HEK293 (cell line): ENCODE measurements at regions of chr6 and their contacts with region 1.

Region 1: GRCh38 chr6:56902641-56903464 is 52.1 kb upstream of the BEND6 start:
- H3K4me3 ChIP-seq: no peak overlapping the region
- H3K27ac ChIP-seq: no peak overlapping the region
- H3K4me1 ChIP-seq: no peaks in the 10 kb centered on the region
- CTCF ChIP-seq: no peak; the same call in 1 of the 2 replicates

Region 2: GRCh38 chr6:56582236-56582635 is 320.6 kb before region 1 on chr6:
- CTCF ChIA-PET with region 1: no interaction called
- POLR2A ChIA-PET with region 1: no interaction called
- H3K4me3 ChIP-seq: no peak overlapping the region
- H3K27ac ChIP-seq: no peak overlapping the region
- H3K4me1 ChIP-seq: no peaks in the 10 kb centered on the region
- CTCF ChIP-seq: no peak

Region 3: GRCh38 chr6:56808871-56809359 is 93.9 kb before region 1 on chr6:
- CTCF ChIA-PET with region 1: no interaction called
- POLR2A ChIA-PET with region 1: no interaction called
- H3K4me3 ChIP-seq: no peak overlapping the region
- H3K27ac ChIP-seq: no peak overlapping the region
- H3K4me1 ChIP-seq: peaks cover 40% of the 10 kb centered on the region
- CTCF ChIP-seq: no peak

Region 4: DNA sequence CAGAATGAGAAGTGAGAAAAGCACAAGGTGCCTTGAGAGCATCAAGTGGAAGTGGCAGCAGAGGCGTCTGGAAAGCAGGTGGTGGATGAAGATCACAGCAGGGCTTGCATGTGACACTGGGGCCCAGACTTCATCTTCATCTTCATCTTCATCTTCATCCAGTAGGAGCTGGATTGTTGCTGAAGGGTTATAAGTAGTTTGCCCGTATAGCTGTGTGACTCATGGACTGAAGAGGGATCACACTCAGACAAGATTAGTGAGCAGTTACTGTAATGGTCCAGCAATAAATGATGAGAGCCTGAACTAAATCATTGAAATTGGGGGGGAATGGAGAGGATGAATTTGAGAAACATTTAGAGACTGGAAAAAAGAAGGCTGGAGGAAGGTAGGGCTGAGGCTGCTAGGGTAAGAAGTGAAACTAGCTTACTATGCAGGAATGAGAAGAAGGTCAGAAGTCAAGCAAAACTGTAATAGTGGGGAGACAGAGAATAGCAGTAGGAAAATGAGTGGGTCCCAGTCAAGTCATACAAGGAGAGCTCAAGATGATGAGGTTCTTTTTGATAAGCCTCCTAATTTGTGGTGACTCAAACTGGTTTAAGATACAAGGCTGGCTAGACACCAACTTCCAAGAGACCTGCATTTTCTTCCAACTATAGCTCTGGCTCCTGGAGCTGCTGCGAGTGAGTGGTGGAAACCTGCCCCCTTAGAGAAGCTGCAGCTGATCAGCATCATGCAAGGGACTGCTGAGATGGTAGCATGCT is 40.3 kb before region 1 on chr6:
- CTCF ChIA-PET with region 1: interaction called, 15 read pairs
- POLR2A ChIA-PET with region 1: no interaction called
- H3K4me3 ChIP-seq: no peak overlapping the region
- H3K27ac ChIP-seq: no peak overlapping the region
- H3K4me1 ChIP-seq: peaks cover 25% of the 10 kb centered on the region
- CTCF ChIP-seq: no peak

Region 5: GRCh38 chr6:56874328-56874727 is 28.5 kb before region 1 on chr6:
- CTCF ChIA-PET with region 1: interaction called, 15 read pairs
- POLR2A ChIA-PET with region 1: interaction called, 3 read pairs
- H3K4me3 ChIP-seq: no peak overlapping the region
- H3K27ac ChIP-seq: no peak overlapping the region
- H3K4me1 ChIP-seq: peaks cover 3% of the 10 kb centered on the region
- CTCF ChIP-seq: no peak

Region 6: DNA sequence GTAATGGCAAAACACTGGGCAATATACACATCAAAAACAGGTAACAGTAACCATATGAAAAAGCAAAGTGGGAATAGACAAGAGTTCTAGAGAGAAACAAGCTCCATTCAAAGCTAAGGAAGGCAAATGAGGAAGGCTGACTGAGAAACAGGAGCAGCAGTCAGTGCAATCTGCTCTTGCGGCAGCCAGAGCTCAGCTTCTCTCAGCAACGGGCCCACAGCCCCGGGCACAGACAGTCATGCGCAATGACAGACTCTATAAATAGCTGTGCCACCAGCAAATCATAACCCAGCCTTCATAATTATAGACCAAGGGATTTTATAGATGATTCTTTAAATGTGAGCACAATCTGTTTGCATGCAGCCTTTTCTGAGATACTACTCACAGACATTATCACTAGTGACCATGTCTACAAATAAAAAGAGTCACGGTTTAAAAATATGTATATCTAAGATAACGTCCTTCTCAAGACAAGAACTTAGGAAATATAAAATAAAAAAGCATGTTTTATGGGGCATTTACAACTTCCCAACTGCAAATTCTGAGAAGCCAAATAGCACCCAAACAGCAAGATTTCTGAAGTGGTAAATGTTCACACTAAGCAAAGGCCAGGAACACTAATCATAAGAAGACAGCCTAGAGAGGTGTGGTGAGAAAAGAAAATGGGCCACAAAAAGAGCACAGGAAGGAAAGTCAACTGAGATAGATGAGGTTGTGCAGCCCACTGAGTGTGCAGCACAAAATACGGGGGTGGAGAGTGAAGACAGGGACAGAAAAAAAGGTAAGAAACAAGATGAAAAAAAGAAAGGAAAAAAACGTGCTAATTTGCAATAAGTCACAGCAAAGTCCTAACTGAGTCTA is 12.2 kb after region 1 on chr6:
- CTCF ChIA-PET with region 1: interaction called, 25 read pairs
- POLR2A ChIA-PET with region 1: interaction called, 3 read pairs
- H3K4me3 ChIP-seq: no peak overlapping the region
- H3K27ac ChIP-seq: no peak overlapping the region
- H3K4me1 ChIP-seq: peaks cover 7% of the 10 kb centered on the region; the same call in 1 of the 2 replicates
- CTCF ChIP-seq: no peak

Region 7: DNA sequence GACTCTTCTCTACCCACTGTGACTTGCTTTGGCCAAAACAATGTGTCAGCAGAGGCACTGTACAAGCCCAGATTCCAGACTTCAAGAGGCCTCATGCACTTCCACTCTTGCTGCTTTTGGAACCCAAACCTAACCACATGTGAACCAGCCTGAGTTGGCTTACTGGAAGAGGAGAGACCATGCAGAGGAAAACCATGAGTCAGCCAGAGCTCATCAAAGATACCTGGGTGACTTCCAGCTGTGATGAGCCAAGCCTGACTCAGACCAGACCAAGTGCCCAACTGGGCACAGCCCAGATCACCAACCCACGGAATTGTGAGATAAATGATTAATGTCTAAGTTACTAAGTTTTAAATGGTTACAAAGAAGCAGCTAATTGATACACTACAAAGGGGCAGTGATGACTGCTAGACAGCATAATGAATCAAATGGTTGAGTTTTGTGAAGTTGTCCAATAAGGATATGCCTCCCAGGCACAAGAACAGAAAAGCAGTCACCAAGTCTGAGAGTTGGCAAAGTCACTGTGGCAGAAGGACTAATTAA is 35.9 kb after region 1 on chr6:
- CTCF ChIA-PET with region 1: interaction called, 69 read pairs
- POLR2A ChIA-PET with region 1: interaction called, 4 read pairs
- H3K4me3 ChIP-seq: no peak overlapping the region
- H3K27ac ChIP-seq: no peak overlapping the region
- H3K4me1 ChIP-seq: peaks cover 9% of the 10 kb centered on the region; the same call in 1 of the 2 replicates
- CTCF ChIP-seq: no peak

Region 8: DNA sequence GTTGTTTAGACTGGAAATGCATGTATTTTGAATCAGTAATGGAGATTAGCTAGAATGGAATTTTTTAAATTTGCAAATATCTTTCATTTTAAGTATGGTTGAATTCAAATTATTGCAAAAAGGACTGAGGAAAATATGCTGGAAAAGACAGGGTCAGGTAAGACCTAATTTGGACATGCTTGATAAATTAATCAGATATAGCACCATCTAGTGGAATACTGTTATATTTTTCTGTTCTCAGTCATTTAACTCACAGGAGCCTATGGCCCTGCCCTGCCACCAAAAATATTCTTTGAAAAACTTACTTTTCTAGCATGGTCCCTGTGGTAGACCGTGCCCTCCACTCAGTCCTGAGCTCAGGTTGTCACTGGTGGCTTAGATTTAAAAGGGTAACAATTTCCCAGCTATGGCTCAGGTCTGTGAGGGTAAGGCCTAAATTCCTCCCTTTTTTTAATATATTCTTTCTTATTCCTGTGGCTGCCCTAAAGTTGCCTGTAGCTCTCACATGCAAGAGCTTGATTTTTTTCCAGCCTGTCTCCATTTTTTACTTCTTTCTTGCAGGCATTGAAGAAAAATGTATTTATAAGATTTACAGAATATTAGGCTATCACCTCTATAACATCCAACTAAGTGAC is 118.3 kb after region 1 on chr6:
- CTCF ChIA-PET with region 1: interaction called, 98 read pairs
- POLR2A ChIA-PET with region 1: interaction called, 4 read pairs
- H3K4me3 ChIP-seq: no peak overlapping the region
- H3K27ac ChIP-seq: no peak overlapping the region
- H3K4me1 ChIP-seq: no peaks in the 10 kb centered on the region
- CTCF ChIP-seq: no peak

Region 9: DNA sequence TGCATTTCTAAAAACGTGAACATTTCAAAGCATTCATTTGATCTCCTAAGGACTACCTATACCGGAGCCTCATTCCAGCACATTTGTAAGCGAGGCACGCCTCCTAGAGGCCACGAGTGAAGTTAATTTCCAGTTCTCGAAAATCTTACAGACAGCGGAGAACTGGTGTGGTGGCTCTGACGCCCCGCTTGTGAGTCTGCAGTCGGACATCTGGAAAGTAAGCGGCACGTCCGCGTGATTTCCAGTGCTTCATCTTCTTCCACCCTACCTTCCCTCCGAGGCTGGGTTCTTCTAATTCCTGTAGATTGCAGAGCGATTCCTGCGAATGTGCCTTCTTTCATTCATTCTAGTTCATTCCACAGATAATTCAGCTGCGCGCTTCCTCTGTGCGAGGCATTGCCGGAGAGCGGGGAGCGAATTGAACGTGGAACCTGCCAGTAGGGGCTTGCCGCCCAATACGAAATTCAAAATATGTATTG is 413.8 kb after region 1 on chr6:
- CTCF ChIA-PET with region 1: interaction called, 83 read pairs
- POLR2A ChIA-PET with region 1: no interaction called
- H3K4me3 ChIP-seq: peak overlapping the region; percentile 80
- H3K27ac ChIP-seq: peak overlapping the region; percentile 43; the same call in 1 of the 2 replicates
- H3K4me1 ChIP-seq: peaks cover 7% of the 10 kb centered on the region; the same call in 1 of the 2 replicates
- CTCF ChIP-seq: peak; percentile 84